ENCODE measurements at regions of chr15 and their contacts with region 1.

Region 1: DNA sequence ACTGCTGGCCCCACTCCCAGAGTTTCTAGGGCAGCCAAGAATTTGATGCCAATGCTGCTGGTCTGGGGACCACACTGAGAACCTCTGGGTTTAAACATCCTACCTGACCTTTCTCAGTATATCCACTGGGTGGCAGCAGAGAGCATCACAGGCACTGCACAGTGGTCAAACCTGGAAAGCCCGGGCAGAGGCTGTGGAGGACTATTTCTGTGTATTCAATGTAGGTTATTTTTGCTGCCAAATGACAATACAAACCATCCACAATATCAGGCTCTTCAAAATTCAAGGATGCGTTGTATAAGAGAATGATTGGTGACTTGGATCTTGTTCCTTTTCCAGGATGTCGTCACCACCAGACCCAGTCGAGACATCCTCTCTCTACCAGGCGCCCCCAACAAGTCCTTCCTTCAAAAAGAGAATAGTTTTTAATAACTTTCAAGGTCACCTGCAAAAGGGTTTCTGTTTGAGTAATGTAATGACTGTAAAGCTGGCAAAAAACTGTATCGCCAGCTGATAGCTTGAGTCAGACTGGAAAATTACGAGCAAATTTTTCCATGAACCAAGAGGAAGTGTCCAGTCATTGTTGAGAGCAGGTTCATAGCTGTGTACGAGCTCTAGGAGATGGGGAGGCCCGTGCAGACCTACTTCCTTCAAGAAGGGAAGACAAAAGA is 30.5 kb upstream of the MYZAP start:
- DNase-seq: peak in 9 of 10 donors; percentile 30 to 79 (median 61)
- H3K4me3 ChIP-seq: peak overlapping the region in 2 of 59 donors; percentile 6 to 12
- H3K27ac ChIP-seq: peak overlapping the region in 3 of 59 donors; percentile 25 to 32 (median 29)
- H3K27me3 ChIP-seq: no peaks in the 10 kb centered on the region
- CTCF ChIP-seq: peak; percentile 80 to 97 (median 92)

Region 2: GRCh38 chr15:56989411-56989924 is 571.7 kb before region 1 on chr15:
- intact Hi-C with region 1: no loop called
- DNase-seq: no peak
- H3K4me3 ChIP-seq: peak overlapping the region in 2 of 59 donors; percentile 8
- H3K27ac ChIP-seq: peak overlapping the region in 36 of 59 donors; percentile 0 to 67 (median 38)
- H3K27me3 ChIP-seq: no peaks in the 10 kb centered on the region
- CTCF ChIP-seq: peak in 1 of 56 donors; percentile 25

Region 3: GRCh38 chr15:57045741-57046382 is 515.3 kb before region 1 on chr15:
- intact Hi-C with region 1: no loop called
- DNase-seq: no peak
- H3K4me3 ChIP-seq: no peak overlapping the region
- H3K27ac ChIP-seq: peak overlapping the region in 56 of 59 donors; percentile 9 to 97 (median 86)
- H3K27me3 ChIP-seq: no peaks in the 10 kb centered on the region
- CTCF ChIP-seq: no peak

Region 4: GRCh38 chr15:57422113-57422754 is 138.9 kb before region 1 on chr15:
- intact Hi-C with region 1: no loop called
- DNase-seq: no peak
- H3K4me3 ChIP-seq: no peak overlapping the region
- H3K27ac ChIP-seq: peak overlapping the region in 7 of 59 donors; percentile 6 to 53 (median 31)
- H3K27me3 ChIP-seq: no peaks in the 10 kb centered on the region
- CTCF ChIP-seq: no peak

Region 5: DNA sequence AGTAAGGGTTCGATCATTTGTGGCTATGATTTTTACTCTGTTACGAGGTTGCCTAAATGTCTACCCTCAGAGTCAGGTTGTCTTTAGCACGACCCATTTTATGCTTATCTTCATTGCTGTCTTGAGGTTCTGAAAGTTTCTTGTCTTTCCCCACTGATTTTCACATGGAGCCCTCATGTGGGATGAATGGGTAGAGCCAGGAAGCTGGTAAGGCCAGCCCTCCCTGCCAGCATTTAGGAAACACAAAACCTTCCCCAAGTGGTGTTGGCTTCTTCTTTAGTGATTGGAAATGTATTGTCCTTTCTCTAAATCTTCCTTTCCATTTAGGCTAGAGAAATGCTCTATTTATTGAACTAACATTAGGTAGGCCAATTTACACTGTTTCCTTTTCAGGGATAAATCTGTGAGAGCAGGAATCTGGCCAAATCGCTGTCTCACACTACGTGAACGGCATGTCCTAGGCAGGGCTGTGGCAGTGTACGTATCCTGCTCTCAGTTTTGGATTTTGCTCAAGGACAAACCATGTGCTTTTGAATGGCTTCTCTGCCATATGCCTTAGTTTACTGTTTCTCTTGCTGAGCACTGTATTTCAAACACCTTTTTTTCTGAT is 74.2 kb after region 1 on chr15:
- intact Hi-C with region 1: loop called in 1 of 2 experiments (anchors 10 kb)
- DNase-seq: peak in 1 of 10 donors; percentile 66
- H3K4me3 ChIP-seq: no peak overlapping the region
- H3K27ac ChIP-seq: peak overlapping the region in 1 of 59 donors; percentile 32
- H3K27me3 ChIP-seq: no peaks in the 10 kb centered on the region
- CTCF ChIP-seq: peak in 2 of 56 donors; percentile 11 to 19

Region 6: DNA sequence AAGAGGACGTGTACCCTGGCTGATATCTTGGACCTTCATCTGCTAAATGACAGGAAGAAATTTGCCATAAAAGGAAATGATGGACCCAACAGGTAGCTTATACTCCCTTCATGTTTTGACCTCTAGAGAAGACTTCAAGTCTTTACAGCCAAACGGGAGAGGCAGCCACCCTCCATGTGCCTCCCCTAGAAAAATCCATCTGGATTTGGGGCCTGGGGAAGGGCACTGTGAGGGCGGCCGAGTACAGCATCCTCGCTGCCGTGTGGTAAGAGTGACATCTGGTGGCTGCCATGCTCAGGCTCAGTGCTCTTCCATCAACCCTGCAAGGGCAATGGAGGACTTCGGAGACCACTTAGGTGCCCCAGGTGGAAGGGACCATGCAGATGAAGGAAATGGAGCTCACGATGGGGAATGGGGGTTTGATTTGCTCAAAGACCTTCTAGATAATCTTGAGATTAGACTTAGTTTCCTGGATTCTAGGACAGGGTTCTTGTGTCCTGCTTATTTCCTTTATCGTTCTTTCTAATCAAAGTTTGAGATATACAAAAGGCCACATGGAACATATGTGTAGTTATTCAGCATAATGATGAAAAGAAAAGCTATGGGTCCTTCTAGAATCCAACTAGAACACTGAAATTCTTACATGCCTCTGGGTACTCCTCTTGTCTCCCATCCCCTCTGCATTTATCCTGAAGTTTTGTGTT is 621.4 kb after region 1 on chr15:
- intact Hi-C with region 1: loop called (anchors 5 to 10 kb)
- DNase-seq: peak in 7 of 10 donors; percentile 7 to 69 (median 38)
- H3K4me3 ChIP-seq: no peak overlapping the region
- H3K27ac ChIP-seq: no peak overlapping the region
- H3K27me3 ChIP-seq: peaks cover 0 to 2% (median 0%) of the 10 kb centered on the region in 45 donors
- CTCF ChIP-seq: peak; percentile 14 to 94 (median 79)